A673 (cell line): ENCODE measurements at regions of chr16 and their contacts with region 1.

Region 1: GRCh38 chr16:21158208-21159110 is at the start of gene LDAF1:
- DNase-seq: peak; percentile 88
- H3K4me3 ChIP-seq: peak within 1 kb of the TSS; percentile 67
- H3K27ac ChIP-seq: peak within 1 kb of the TSS; percentile 36
- H3K4me1 ChIP-seq: peaks cover 19% of the 10 kb centered on the region
- H3K27me3 ChIP-seq: no peaks in the 10 kb centered on the region
- CTCF ChIP-seq: no peak
- total RNA-seq, gene LDAF1: 5.9 and 7.0 TPM in 2 replicates

Region 2: DNA sequence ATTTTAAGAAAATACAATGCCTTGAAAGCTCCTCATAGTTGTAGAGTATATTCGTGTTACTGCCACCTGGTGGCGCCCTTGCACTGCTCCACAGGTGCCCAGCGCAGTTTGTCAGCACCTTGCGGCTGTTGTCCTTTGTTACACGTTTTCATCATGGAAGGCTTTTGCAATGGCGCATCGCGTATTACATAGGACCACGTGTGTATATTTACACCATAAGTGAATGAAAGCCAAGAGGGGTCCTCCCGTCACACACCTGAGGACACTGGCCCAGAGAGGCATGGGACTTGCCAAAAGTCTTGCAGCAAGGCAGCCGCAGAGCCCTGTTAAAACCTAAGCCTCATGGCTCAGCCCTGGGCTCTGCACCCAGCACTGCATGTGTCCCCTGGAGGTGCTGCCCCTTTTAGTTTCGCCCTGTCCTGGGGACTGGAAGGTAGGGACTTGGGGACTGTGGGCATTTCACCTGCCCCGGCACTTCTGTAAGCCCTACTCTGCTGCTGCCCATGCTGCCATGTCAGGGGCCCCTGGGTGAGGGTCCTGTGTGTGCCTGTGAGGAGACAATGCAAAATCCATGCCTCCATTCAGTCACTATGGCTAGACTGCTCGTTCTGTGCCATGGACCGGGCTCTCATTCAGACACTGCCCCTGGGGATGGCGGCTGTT is 1163.0 kb after region 1 on chr16:
- CTCF ChIA-PET with region 1: no interaction called
- POLR2A ChIA-PET with region 1: no interaction called
- intact Hi-C with region 1: loop called (anchors 5 kb)
- DNase-seq: peak; percentile 81
- H3K4me3 ChIP-seq: no peak overlapping the region
- H3K27ac ChIP-seq: no peak overlapping the region
- H3K4me1 ChIP-seq: no peaks in the 10 kb centered on the region
- H3K27me3 ChIP-seq: no peaks in the 10 kb centered on the region
- CTCF ChIP-seq: peak; percentile 98